ENCODE measurements at regions of chr2 and their contacts with region 1.

Region 1: GRCh38 chr2:73828818-73829570 is at the start of gene STAMBP:
- DNase-seq: peak; percentile 95 to 98
- H3K4me3 ChIP-seq: peak within 1 kb of the TSS; percentile 85
- H3K4me1 ChIP-seq: peaks cover 22% of the 10 kb centered on the region
- H3K27me3 ChIP-seq: 0 out of 2 replicates have a peak, but pooled peaks cover 3% of the 10 kb centered on the region

Region 2: GRCh38 chr2:73489053-73489452 is 339.9 kb before region 1 on chr2:
- in situ Hi-C with region 1: no loop called
- DNase-seq: no peak
- H3K4me3 ChIP-seq: no peak overlapping the region
- H3K4me1 ChIP-seq: no peaks in the 10 kb centered on the region
- H3K27me3 ChIP-seq: no peaks in the 10 kb centered on the region

Region 3: GRCh38 chr2:73926493-73927338 is 97.7 kb after region 1 on chr2 and contains the start of gene DGUOK:
- in situ Hi-C with region 1: no loop called
- DNase-seq: peak; percentile 96 to 98
- H3K4me3 ChIP-seq: peak within 1 kb of the TSS; percentile 80
- H3K4me1 ChIP-seq: peaks cover 18% of the 10 kb centered on the region
- H3K27me3 ChIP-seq: no peaks in the 10 kb centered on the region

Region 4: GRCh38 chr2:74107071-74107470 is 278.1 kb after region 1 on chr2:
- in situ Hi-C with region 1: no loop called
- DNase-seq: no peak
- H3K4me3 ChIP-seq: no peak overlapping the region
- H3K4me1 ChIP-seq: no peaks in the 10 kb centered on the region
- H3K27me3 ChIP-seq: no peaks in the 10 kb centered on the region

Region 5: GRCh38 chr2:74149570-74150319 is 320.8 kb after region 1 on chr2:
- in situ Hi-C with region 1: loop called (anchors 10 kb)
- DNase-seq: no peak
- H3K4me3 ChIP-seq: no peak overlapping the region
- H3K4me1 ChIP-seq: peaks cover 16% of the 10 kb centered on the region
- H3K27me3 ChIP-seq: no peaks in the 10 kb centered on the region